ENCODE measurements at regions of chr2 and their contacts with region 1.

Region 1: DNA sequence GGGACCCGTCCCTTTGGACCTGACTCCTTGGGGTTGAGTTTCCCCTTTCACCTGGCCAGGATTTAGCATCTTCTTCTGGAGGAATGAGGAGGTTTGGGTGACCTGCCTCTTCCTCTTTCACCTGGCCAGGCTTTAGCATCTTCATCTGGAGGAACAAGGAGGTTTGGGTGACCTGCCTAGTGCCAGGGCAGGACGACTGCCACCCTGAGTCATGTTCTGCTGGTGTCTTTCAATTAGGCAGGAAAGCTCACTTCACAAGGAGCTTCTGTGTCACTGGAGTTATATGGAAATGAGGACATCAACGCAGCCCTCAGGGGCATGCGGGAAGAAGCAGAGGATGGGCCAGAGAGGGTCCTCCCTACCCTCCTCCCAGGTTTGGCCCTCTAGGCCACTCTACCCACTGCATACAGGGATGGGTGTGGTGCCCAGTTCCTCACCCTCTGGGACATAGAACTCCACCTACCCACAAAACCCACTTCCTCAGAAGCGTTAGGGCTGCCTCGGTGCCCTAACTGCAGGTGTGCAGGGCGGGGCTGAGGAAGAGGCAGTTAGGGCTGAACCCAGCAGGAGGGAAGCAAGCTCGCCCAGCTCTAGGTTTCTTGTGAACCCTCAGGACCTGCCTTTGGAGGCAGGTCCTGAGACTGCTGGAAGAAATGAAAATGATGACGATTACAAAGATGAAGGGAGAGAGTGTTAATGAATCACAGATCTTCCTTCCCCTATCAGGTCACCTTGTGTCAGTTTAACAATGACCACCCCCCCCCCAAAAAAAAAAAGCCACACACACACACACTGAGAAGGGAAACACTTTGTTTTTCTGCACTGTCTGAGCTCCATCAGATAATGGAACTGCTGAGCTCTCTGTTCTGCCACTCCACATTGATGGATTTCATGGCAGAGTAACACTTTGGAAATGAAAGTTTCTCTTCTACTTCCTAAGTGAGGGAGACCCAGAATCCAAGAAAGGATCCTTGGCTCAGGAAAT is 71.0 kb downstream of the ARL4C start:
- DNase-seq: peak; percentile 77
- H3K4me3 Mint-ChIP-seq: peak overlapping the region; percentile 72
- H3K27ac Mint-ChIP-seq: peak overlapping the region; percentile 88
- H3K4me1 Mint-ChIP-seq: peaks cover 77% of the 10 kb centered on the region
- H3K27me3 Mint-ChIP-seq: no peaks in the 10 kb centered on the region

Region 2: DNA sequence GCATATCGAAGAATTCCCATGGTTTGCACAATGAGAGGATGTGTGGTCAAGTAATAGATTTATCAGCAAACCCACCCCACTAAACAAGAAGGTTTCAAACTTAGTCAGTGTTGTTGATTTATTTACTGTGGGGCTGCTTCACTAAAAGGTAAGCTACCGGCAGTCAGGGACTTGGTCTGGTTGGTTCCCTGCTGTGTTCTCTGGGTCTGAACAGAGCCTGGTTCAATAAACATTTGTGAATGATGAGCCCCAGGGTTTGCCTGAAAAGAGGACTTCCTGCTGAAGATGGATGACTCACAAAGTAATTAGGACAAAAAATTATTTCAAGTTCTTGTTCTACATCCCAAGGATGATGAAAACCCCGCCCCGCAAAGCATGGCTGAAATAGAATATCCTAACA is 267.1 kb before region 1 on chr2:
- CTCF ChIA-PET with region 1: no interaction called
- intact Hi-C with region 1: no loop called
- DNase-seq: no peak
- H3K4me3 Mint-ChIP-seq: no peak overlapping the region
- H3K27ac Mint-ChIP-seq: no peak overlapping the region
- H3K4me1 Mint-ChIP-seq: peaks cover 6% of the 10 kb centered on the region
- H3K27me3 Mint-ChIP-seq: no peaks in the 10 kb centered on the region

Region 3: DNA sequence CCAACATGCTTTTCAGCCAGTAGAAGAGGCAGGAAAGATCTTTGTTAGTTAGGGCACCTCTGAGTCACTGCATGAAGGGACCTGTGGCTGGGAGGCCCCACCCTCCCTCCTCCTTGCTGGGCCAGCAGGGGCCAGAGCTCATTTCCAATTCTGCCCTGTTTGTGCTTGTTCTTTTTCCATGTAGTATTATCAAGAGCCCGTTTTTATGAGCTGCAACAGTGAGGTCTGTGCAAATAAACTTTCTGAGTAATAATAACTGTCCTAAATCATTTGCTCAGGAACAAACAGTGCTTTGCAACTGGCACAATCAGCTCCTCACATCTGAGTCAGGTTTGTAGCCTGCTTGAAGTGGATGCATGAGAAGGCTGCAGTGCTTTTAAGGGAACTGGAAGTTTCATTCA is 57.0 kb before region 1 on chr2:
- CTCF ChIA-PET with region 1: interaction called, 4 read pairs
- intact Hi-C with region 1: loop called (anchors 1 kb)
- DNase-seq: peak; percentile 58
- H3K4me3 Mint-ChIP-seq: no peak overlapping the region
- H3K27ac Mint-ChIP-seq: peak overlapping the region; percentile 74
- H3K4me1 Mint-ChIP-seq: peaks cover 73% of the 10 kb centered on the region
- H3K27me3 Mint-ChIP-seq: no peaks in the 10 kb centered on the region

Region 4: GRCh38 chr2:234446404-234447076 is 20.6 kb after region 1 on chr2:
- CTCF ChIA-PET with region 1: interaction called, 7 read pairs
- intact Hi-C with region 1: loop called (anchors 1 kb)
- DNase-seq: peak; percentile 84
- H3K4me3 Mint-ChIP-seq: peak overlapping the region; percentile 73
- H3K27ac Mint-ChIP-seq: peak overlapping the region; percentile 96
- H3K4me1 Mint-ChIP-seq: peaks cover 80% of the 10 kb centered on the region
- H3K27me3 Mint-ChIP-seq: no peaks in the 10 kb centered on the region

Region 5: GRCh38 chr2:234463626-234464290 is 37.8 kb after region 1 on chr2:
- CTCF ChIA-PET with region 1: no interaction called
- intact Hi-C with region 1: loop called (anchors 1 kb)
- DNase-seq: peak; percentile 83
- H3K4me3 Mint-ChIP-seq: peak overlapping the region; percentile 72
- H3K27ac Mint-ChIP-seq: peak overlapping the region; percentile 89
- H3K4me1 Mint-ChIP-seq: peaks cover 73% of the 10 kb centered on the region
- H3K27me3 Mint-ChIP-seq: no peaks in the 10 kb centered on the region

Region 6: GRCh38 chr2:234488913-234489451 is 63.1 kb after region 1 on chr2:
- CTCF ChIA-PET with region 1: interaction called, 3 read pairs
- intact Hi-C with region 1: loop called (anchors 1 kb)
- DNase-seq: peak; percentile 79
- H3K4me3 Mint-ChIP-seq: peak overlapping the region; percentile 78
- H3K27ac Mint-ChIP-seq: peak overlapping the region; percentile 94
- H3K4me1 Mint-ChIP-seq: peaks cover 84% of the 10 kb centered on the region
- H3K27me3 Mint-ChIP-seq: no peaks in the 10 kb centered on the region

Measured in activated naive CD4-positive, alpha-beta T cell treated with anti-CD3 and anti-CD28 coated beads for 36 hours (primary cell).